Left ventricle myocardium superior (tissue), 1 donor: ENCODE measurements at regions of chr15 and their contacts with region 1.

Region 1: GRCh38 chr15:43285609-43286037 is 18.9 kb upstream of the TGM5 start:
- DNase-seq: no peak
- ATAC-seq: peak; percentile 74

Region 2: GRCh38 chr15:43225201-43225949 is 60.2 kb before region 1 on chr15:
- intact Hi-C with region 1: loop called (anchors 2 kb)
- DNase-seq: no peak
- ATAC-seq: peak; percentile 84